Ovary (tissue), 10 donors: ENCODE measurements at regions of chr11 and their contacts with region 1.

Region 1: GRCh38 chr11:111283945-111284481 is 14.3 kb upstream of the POU2AF3 start:
- DNase-seq: peak in 4 of 5 donors; percentile 20 to 60 (median 35)
- H3K4me3 ChIP-seq: no peak overlapping the region
- H3K27ac ChIP-seq: no peak overlapping the region
- H3K4me1 ChIP-seq: no peaks in the 10 kb centered on the region
- H3K27me3 ChIP-seq: no peaks in the 10 kb centered on the region
- CTCF ChIP-seq: no peak
- EP300 ChIP-seq: no peak
- POLR2A ChIP-seq: no peak

Region 2: GRCh38 chr11:111230122-111230465 is 53.9 kb before region 1 on chr11:
- intact Hi-C with region 1: no loop called
- DNase-seq: no peak
- H3K4me3 ChIP-seq: no peak overlapping the region
- H3K27ac ChIP-seq: no peak overlapping the region
- H3K4me1 ChIP-seq: peaks cover 1% of the 10 kb centered on the region
- H3K27me3 ChIP-seq: no peaks in the 10 kb centered on the region
- CTCF ChIP-seq: no peak
- EP300 ChIP-seq: no peak
- POLR2A ChIP-seq: no peak

Region 3: DNA sequence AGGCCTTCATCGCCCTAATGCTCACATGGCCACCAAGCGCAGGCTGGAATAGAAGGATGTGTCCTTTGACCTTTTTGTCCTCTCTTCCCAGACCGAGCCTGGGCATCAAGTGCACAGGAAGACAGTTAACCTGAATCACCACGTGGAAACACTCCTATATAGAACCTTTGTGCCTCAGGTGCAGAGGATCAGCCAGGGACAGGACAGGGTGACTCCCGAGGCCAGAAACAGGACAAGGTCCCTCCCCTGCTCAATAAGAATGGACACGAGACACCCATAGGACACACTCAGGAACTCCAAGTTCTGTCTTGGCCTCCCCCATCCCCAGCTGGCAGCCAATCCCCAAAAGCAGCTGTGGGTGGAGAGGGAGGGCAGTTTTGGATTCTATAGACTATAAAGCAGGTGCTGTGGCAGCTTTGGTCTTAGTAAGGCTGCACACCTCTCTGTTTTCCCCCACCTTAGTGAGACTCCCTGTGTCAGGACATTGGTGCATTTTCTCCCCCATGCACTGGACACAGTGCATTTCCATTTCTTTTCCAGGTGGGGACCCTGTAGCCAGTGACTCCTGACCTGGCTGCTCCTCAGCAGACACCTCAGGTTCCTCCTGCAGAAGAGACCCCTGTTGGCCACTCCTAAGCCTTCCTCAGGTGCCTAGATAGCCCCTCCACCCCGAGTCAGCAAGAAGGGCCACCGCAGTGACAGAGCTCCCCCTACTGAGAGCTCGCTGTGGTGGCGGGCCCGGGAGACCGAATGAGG is 138.7 kb after region 1 on chr11:
- intact Hi-C with region 1: loop called (anchors 2 to 5 kb)
- DNase-seq: peak; percentile 59 to 76 (median 67)
- H3K4me3 ChIP-seq: no peak overlapping the region
- H3K27ac ChIP-seq: no peak overlapping the region
- H3K4me1 ChIP-seq: peaks cover 18% of the 10 kb centered on the region
- H3K27me3 ChIP-seq: no peaks in the 10 kb centered on the region
- CTCF ChIP-seq: peak; percentile 46 to 64 (median 61)
- EP300 ChIP-seq: no peak
- POLR2A ChIP-seq: no peak

Region 4: GRCh38 chr11:111446404-111447111 is 162.5 kb after region 1 on chr11:
- intact Hi-C with region 1: loop called (anchors 5 kb)
- DNase-seq: peak; percentile 68 to 77 (median 74)
- H3K4me3 ChIP-seq: no peak overlapping the region
- H3K27ac ChIP-seq: no peak overlapping the region
- H3K4me1 ChIP-seq: no peaks in the 10 kb centered on the region
- H3K27me3 ChIP-seq: no peaks in the 10 kb centered on the region
- CTCF ChIP-seq: peak; percentile 42 to 78 (median 73)
- EP300 ChIP-seq: no peak
- POLR2A ChIP-seq: no peak